ENCODE measurements at regions of chr1 and their contacts with region 1.

Region 1: GRCh38 chr1:162133566-162133965 is 64.1 kb downstream of the NOS1AP start:
- DNase-seq: no peak
- ATAC-seq: no peak
- H3K4me3 ChIP-seq: no peak overlapping the region
- H3K27ac ChIP-seq: no peak overlapping the region
- H3K4me1 ChIP-seq: peaks cover 98% of the 10 kb centered on the region
- H3K27me3 ChIP-seq: no peaks in the 10 kb centered on the region
- CTCF ChIP-seq: no peak
- EP300 ChIP-seq: no peak
- POLR2A ChIP-seq: no peak
- RAD21 ChIP-seq: no peak

Region 2: GRCh38 chr1:162091681-162092524 is 41.7 kb before region 1 on chr1:
- CTCF ChIA-PET with region 1: no interaction called
- POLR2A ChIA-PET with region 1: interaction called, 7 read pairs
- in situ Hi-C with region 1: no loop called
- intact Hi-C with region 1: loop called (anchors 1 kb)
- DNase-seq: peak; percentile 97
- ATAC-seq: peak; percentile 96
- H3K4me3 ChIP-seq: peak overlapping the region; percentile 8 to 50 (median 29); a peak in 4 of 6 replicates
- H3K27ac ChIP-seq: peak overlapping the region; percentile 71
- H3K4me1 ChIP-seq: peaks cover 81% of the 10 kb centered on the region
- H3K27me3 ChIP-seq: no peaks in the 10 kb centered on the region
- CTCF ChIP-seq: no peak; the same call in 1 of the 2 replicates
- EP300 ChIP-seq: peak; percentile 53 to 94; a peak in 3 of 4 replicates
- POLR2A ChIP-seq: no peak
- RAD21 ChIP-seq: no peak; the same call in 1 of the 2 replicates

Region 3: DNA sequence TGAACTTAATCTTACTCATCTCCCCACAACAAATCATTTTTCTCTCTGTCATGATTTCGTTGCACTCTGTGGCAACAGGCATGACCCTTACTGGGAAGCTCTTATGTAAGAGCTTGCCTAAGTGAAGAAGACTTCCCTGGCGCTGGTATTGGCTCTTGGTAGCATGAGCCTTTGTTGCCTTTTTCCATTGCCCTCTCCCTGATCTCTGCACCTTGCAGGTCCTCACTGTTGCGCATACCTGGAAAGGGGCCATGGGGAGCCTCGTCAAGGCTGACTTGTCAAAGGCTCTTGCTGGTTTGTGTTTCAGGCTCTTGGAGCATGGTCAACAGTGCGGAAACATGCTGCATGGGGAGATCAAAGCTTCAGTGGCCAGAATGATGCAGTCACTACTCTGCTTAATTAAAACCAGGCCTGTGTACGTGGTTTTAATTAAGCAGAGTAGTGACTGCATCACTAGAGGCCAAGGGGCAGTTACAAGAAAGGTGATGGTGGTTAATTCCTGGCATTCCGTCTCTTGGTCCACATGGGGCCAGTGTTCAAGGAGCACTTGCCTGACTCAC is 101.8 kb after region 1 on chr1:
- CTCF ChIA-PET with region 1: no interaction called
- POLR2A ChIA-PET with region 1: no interaction called
- in situ Hi-C with region 1: no loop called
- intact Hi-C with region 1: loop called (anchors 5 kb)
- DNase-seq: peak; percentile 91
- ATAC-seq: peak; percentile 87
- H3K4me3 ChIP-seq: no peak overlapping the region
- H3K27ac ChIP-seq: peak overlapping the region; percentile 39
- H3K4me1 ChIP-seq: peaks cover 81% of the 10 kb centered on the region
- H3K27me3 ChIP-seq: no peaks in the 10 kb centered on the region
- CTCF ChIP-seq: no peak
- EP300 ChIP-seq: peak; percentile 35 to 77; a peak in 2 of 4 replicates
- POLR2A ChIP-seq: no peak
- RAD21 ChIP-seq: no peak